ENCODE measurements at regions of chr4 and their contacts with region 1.

Region 1: GRCh38 chr4:139295206-139295941 is 5.9 kb upstream of the NAA15 start:
- DNase-seq: peak; percentile 97 to 99
- ATAC-seq: peak; percentile 83 to 90 (median 88)
- H3K4me3 ChIP-seq: peak overlapping the region; percentile 91
- H3K27ac ChIP-seq: peak overlapping the region; percentile 99
- H3K4me1 ChIP-seq: peaks cover 44% of the 10 kb centered on the region
- H3K27me3 ChIP-seq: no peaks in the 10 kb centered on the region
- CTCF ChIP-seq: peak; percentile 98

Region 2: GRCh38 chr4:139060591-139060990 is 234.8 kb before region 1 on chr4:
- intact Hi-C with region 1: no loop called
- DNase-seq: no peak
- ATAC-seq: no peak
- H3K4me3 ChIP-seq: no peak overlapping the region
- H3K27ac ChIP-seq: no peak overlapping the region
- H3K4me1 ChIP-seq: peaks cover 27% of the 10 kb centered on the region
- H3K27me3 ChIP-seq: no peaks in the 10 kb centered on the region
- CTCF ChIP-seq: no peak

Region 3: DNA sequence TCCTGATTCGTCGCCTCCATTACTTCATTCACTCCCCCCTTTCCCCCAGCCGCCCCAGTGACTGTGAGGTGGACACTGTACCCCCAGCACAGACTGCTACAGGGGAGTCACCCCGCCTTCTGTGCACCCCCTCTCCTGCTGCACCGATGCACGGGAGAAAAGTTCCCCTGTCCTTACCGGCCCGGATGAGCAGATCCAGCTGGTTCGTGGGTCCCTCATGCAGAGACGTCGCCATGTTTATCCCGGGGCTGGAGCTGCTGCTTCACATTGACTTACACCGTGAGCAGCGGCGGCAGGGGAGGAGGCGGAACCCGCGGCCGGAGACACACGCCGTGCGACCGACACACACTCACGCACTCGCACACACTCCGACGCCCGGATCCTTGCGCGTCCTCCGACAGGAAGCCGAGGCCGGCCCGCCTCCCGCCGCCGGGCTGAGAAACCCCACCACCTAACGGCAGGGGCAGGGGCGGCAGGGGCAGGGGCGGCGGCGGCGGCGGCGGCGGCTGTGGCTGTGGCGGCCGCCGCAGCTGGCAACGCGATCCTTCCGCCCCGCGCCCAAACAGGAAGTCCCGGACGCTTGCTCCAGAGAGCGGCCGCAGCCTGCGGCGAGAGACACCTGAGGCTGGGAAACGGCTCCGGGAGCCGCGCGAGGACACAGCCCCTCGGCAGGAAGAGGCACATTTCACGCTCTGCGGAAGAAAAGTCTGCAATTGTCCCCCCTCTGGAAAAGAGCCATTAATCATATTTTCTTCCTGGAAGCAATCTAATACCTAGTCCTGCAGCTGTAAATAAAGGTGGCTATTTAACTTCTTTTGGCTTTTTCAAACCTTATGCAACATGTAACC is 211.2 kb before region 1 on chr4:
- intact Hi-C with region 1: loop called in 1 of 2 experiments (anchors 5 kb)
- DNase-seq: peak; percentile 88 to 96
- ATAC-seq: peak; percentile 73 to 80 (median 79)
- H3K4me3 ChIP-seq: peak overlapping the region; percentile 83
- H3K27ac ChIP-seq: peak overlapping the region; percentile 98
- H3K4me1 ChIP-seq: peaks cover 43% of the 10 kb centered on the region
- H3K27me3 ChIP-seq: no peaks in the 10 kb centered on the region
- CTCF ChIP-seq: peak; percentile 43

Region 4: GRCh38 chr4:139099366-139099982 is 195.9 kb before region 1 on chr4:
- intact Hi-C with region 1: loop called in 1 of 2 experiments (anchors 5 kb)
- DNase-seq: peak; percentile 55 to 68
- ATAC-seq: peak; percentile 79 to 90 (median 86)
- H3K4me3 ChIP-seq: no peak overlapping the region
- H3K27ac ChIP-seq: no peak overlapping the region
- H3K4me1 ChIP-seq: no peaks in the 10 kb centered on the region
- H3K27me3 ChIP-seq: no peaks in the 10 kb centered on the region
- CTCF ChIP-seq: peak; percentile 90

Region 5: GRCh38 chr4:139177868-139178611 is 117.3 kb before region 1 on chr4:
- intact Hi-C with region 1: loop called (anchors 2 to 5 kb)
- DNase-seq: peak; percentile 96 to 98
- ATAC-seq: peak; percentile 80 to 88 (median 82)
- H3K4me3 ChIP-seq: peak overlapping the region; percentile 99
- H3K27ac ChIP-seq: peak overlapping the region; percentile 100
- H3K4me1 ChIP-seq: peaks cover 18% of the 10 kb centered on the region
- H3K27me3 ChIP-seq: no peaks in the 10 kb centered on the region
- CTCF ChIP-seq: no peak

Region 6: GRCh38 chr4:139229534-139230039 is 65.8 kb before region 1 on chr4:
- intact Hi-C with region 1: loop called (anchors 5 kb)
- DNase-seq: no peak
- ATAC-seq: peak; percentile 63 to 89 (median 71)
- H3K4me3 ChIP-seq: no peak overlapping the region
- H3K27ac ChIP-seq: no peak overlapping the region
- H3K4me1 ChIP-seq: no peaks in the 10 kb centered on the region
- H3K27me3 ChIP-seq: no peaks in the 10 kb centered on the region
- CTCF ChIP-seq: peak; percentile 74

Region 7: GRCh38 chr4:139416073-139416673 is 120.8 kb after region 1 on chr4:
- intact Hi-C with region 1: no loop called
- DNase-seq: no peak
- ATAC-seq: peak in 2 of 4 donors; percentile 36 to 41
- H3K4me3 ChIP-seq: no peak overlapping the region
- H3K27ac ChIP-seq: no peak overlapping the region
- H3K4me1 ChIP-seq: no peaks in the 10 kb centered on the region
- H3K27me3 ChIP-seq: no peaks in the 10 kb centered on the region
- CTCF ChIP-seq: peak; percentile 74

Measured in psoas muscle (tissue), 8 donors.